AG04450 (cell line): ENCODE measurements at regions of chr13 and their contacts with region 1.

Region 1: GRCh38 chr13:35818633-35819067 is 312.5 kb downstream of the DCLK1 start:
- DNase-seq: no peak
- H3K4me3 ChIP-seq: no peak overlapping the region
- H3K27ac ChIP-seq: no peak overlapping the region
- H3K27me3 ChIP-seq: no peaks in the 10 kb centered on the region
- CTCF ChIP-seq: peak; percentile 78

Region 2: GRCh38 chr13:35720690-35721554 is 97.7 kb before region 1 on chr13:
- CTCF ChIA-PET with region 1: interaction called, 21 read pairs
- POLR2A ChIA-PET with region 1: no interaction called
- DNase-seq: no peak
- H3K4me3 ChIP-seq: peak overlapping the region; percentile 47
- H3K27ac ChIP-seq: no peak overlapping the region
- H3K27me3 ChIP-seq: peaks cover 2% of the 10 kb centered on the region
- CTCF ChIP-seq: peak; percentile 100

Region 3: DNA sequence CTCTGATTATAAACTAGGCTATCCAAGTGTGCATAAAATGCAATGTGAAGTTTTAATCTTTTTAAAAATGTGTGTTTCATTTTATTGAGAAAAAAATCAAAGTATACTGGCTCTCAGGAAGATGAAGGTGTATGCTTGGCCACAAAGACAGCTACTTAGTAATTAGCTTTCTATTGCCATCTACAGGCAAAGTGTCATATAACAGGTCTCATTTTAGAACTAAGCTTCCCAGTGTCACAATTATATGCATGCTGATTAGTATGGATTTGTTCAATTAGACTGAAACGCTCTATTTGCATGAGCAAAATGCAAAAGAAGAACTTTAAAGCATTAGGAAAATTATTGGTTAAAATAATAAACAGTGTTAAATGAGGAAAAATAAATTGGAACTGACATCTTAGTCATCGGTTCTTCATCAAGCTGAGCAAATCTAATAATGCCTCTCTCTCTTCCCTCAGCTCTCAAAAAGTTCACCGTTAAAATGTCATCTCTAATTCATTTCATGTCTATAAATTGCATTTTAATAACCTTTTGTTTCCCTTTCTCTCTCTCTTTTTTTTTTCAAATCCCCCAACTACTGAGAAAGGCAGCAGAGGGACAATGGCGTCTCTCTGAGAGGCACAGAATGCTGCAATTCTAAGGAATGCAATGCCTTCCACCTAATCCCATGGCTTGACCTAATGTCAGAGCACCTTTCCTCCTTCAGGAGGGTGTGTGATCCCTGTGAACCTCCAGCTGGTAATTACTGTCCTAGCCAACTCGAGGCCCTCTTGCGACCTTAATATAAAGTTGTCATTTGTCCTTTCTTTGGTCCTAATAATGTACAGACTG is 29.1 kb before region 1 on chr13:
- CTCF ChIA-PET with region 1: interaction called, 18 read pairs
- POLR2A ChIA-PET with region 1: no interaction called
- DNase-seq: no peak
- H3K4me3 ChIP-seq: no peak overlapping the region
- H3K27ac ChIP-seq: no peak overlapping the region
- H3K27me3 ChIP-seq: no peaks in the 10 kb centered on the region
- CTCF ChIP-seq: peak; percentile 69

Region 4: DNA sequence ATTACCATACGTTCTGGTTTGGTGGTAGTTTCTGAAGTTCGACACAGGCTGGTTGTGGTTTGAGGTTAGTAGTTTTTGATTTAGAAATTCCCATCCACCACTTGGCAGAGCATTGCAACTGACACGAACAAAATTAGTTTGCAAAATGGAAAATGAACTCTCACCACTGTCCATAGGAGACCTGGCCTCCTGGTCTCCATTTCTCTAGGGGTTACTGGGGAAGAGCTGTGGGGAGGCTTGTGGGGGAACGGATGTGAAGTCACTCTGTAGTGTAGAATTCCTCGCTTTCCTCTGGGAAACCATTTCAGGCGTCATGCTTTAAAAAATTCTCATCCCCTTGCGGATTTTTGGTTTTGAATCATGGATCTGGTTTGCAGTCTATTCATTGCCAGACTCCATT is 20.7 kb before region 1 on chr13:
- CTCF ChIA-PET with region 1: interaction called, 10 read pairs
- POLR2A ChIA-PET with region 1: no interaction called
- DNase-seq: no peak
- H3K4me3 ChIP-seq: no peak overlapping the region
- H3K27ac ChIP-seq: peak overlapping the region; percentile 21
- H3K27me3 ChIP-seq: no peaks in the 10 kb centered on the region
- CTCF ChIP-seq: no peak

Region 5: DNA sequence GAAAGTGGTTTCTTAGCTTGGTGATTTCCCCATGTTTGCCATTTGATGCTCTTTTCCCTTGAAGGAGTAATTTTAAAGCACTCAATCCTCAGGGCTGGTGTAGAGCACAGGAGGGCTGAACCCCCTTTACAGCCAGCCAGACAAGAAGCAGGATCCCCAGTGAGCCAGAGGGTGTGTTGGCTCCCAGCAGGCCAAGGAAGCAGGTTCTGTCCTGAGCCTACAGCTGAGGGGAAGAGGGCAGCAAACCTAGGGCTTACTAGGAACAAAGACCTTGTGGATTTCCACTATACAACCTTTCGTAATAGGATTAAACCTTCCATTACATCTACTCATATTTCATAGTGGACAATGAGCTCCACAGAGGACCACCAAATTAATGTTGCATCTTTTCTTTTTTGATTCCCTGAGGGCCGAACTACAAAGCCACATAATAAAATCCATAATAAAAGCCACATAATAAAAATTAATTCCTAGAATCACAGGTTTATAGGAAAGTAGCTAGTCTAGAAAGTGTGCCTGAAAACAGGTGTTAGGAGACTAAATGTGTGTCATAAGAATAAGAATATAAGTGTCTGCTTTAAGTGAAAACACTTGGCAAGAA is 12.3 kb after region 1 on chr13:
- CTCF ChIA-PET with region 1: interaction called, 26 read pairs
- POLR2A ChIA-PET with region 1: no interaction called
- DNase-seq: no peak
- H3K4me3 ChIP-seq: no peak overlapping the region
- H3K27ac ChIP-seq: no peak overlapping the region
- H3K27me3 ChIP-seq: no peaks in the 10 kb centered on the region
- CTCF ChIP-seq: no peak

Region 6: DNA sequence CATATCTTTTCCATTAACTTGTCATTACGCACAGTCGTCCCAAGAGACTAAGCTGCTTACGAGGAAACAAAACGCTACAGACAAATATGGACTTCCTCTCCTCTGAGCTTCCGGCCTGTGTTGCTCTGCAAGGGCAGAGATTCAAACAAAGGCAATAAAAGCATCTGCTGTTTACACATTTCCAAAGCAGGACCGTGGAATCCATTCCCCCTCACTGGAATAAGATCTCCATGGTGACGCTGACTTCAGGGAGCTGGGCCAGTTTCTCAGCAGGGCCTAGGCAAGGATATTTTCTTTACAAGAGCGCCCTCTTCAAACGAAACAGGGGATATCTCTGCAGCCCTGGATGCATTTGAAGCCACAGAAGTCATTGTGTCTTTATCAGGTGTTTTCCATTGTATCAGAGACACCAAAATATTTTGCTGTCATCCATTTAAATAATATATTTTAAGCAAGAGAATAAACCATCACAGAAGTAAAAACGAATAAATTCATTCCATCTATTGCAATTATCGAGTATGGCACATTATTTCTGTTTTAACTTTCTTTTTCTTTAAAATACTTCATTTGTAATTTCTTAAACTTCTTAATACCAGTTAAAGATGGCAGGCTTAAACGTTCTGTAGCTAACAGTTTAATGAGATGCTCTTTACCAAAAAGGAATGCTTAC is 135.0 kb after region 1 on chr13:
- CTCF ChIA-PET with region 1: interaction called, 19 read pairs
- POLR2A ChIA-PET with region 1: no interaction called
- DNase-seq: peak; percentile 79
- H3K4me3 ChIP-seq: peak overlapping the region; percentile 21
- H3K27ac ChIP-seq: no peak overlapping the region
- H3K27me3 ChIP-seq: peaks cover 1% of the 10 kb centered on the region
- CTCF ChIP-seq: peak; percentile 73